Activated T-helper 2 cell treated with anti-CD3 and anti-CD28 coated beads, Interferon-gamma antibody, Interleukin-2, Interleukin-4, amounts not matched to agents 10 μg/mL and 5 μg/mL and 100 μg/mL, durations not matched to agents 14 hours and 24 hours and 36 hours (primary cell): ENCODE measurements at regions of chr5 and their contacts with region 1.

Region 1: GRCh38 chr5:170293273-170293672 is 4.3 kb downstream of the LCP2 start:
- DNase-seq: peak; percentile 60
- H3K4me3 Mint-ChIP-seq: peak overlapping the region; percentile 98
- H3K27ac Mint-ChIP-seq: peak overlapping the region; percentile 92
- H3K4me1 Mint-ChIP-seq: peaks cover 76% of the 10 kb centered on the region
- H3K27me3 Mint-ChIP-seq: no peaks in the 10 kb centered on the region

Region 2: GRCh38 chr5:170312666-170313065 is 19.4 kb after region 1 on chr5:
- intact Hi-C with region 1: loop called (anchors 1 kb)
- DNase-seq: no peak
- H3K4me3 Mint-ChIP-seq: peak overlapping the region; percentile 75
- H3K27ac Mint-ChIP-seq: peak overlapping the region; percentile 88
- H3K4me1 Mint-ChIP-seq: peaks cover 50% of the 10 kb centered on the region
- H3K27me3 Mint-ChIP-seq: no peaks in the 10 kb centered on the region